SK-N-SH (cell line): ENCODE measurements at regions of chr4 and their contacts with region 1.

Region 1: GRCh38 chr4:115234405-115235093 is 121.1 kb upstream of the NDST4 start:
- DNase-seq: peak; percentile 15
- H3K4me3 ChIP-seq: no peak overlapping the region
- H3K27ac ChIP-seq: no peak overlapping the region
- H3K4me1 ChIP-seq: peaks cover 0 to 5% of the 10 kb centered on the region in 2 experiments; a peak in 1 of 4 replicates
- H3K27me3 ChIP-seq: no peaks in the 10 kb centered on the region
- CTCF ChIP-seq: peak; percentile 54
- EP300 ChIP-seq: no peak
- RAD21 ChIP-seq: peak; percentile 62

Region 2: DNA sequence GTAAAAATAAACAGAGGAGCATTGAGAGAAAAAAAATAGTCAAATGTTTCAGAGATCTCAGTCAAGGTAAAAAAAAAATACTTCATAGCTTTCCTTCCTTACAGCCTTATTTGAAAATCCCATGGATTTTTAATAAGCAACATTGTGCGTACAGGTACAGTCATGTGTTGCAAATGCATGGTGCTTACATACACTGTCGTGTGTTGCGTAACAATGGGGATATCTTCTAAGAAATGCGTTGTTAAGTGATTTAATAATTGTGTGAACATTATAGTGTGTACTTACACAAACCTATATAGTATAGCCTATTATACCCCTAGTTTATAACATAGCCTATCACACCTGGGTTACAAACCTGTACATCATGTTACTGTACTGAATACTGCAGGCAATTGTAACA is 463.9 kb before region 1 on chr4:
- CTCF ChIA-PET with region 1: no interaction called
- POLR2A ChIA-PET with region 1: no interaction called
- DNase-seq: no peak
- H3K4me3 ChIP-seq: no peak overlapping the region
- H3K27ac ChIP-seq: no peak overlapping the region
- H3K4me1 ChIP-seq: no peaks in the 10 kb centered on the region
- H3K27me3 ChIP-seq: no peaks in the 10 kb centered on the region
- CTCF ChIP-seq: no peak
- EP300 ChIP-seq: no peak
- RAD21 ChIP-seq: no peak

Region 3: DNA sequence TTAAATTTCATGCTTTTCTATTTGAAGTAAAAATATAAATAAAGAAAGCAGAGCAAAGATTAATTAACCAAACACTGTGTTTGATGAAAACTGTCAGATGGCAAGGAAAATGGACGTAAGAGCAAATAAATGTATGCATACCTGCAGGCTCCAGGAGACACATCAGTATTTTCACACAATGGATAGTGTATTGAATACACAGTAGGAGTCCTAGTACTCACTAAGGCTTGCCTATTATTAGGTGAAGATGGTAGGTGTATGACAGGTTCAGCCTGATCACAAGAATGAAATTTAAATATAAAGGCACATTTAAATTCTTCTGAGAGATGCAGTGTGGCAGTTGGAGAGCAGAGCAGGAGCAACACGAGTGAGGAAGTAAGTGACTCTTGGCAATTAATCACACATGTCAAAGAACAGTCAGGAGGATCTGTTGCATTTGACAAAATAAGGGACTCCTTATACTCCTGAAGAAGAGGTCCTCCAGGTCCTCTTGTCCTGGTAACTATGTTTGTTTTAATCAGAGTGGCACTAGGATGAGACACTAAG is 15.2 kb before region 1 on chr4:
- CTCF ChIA-PET with region 1: interaction called, 11 read pairs
- POLR2A ChIA-PET with region 1: no interaction called
- DNase-seq: no peak
- H3K4me3 ChIP-seq: no peak overlapping the region
- H3K27ac ChIP-seq: no peak overlapping the region
- H3K4me1 ChIP-seq: no peaks in the 10 kb centered on the region
- H3K27me3 ChIP-seq: no peaks in the 10 kb centered on the region
- CTCF ChIP-seq: no peak
- EP300 ChIP-seq: no peak
- RAD21 ChIP-seq: no peak

Region 4: GRCh38 chr4:115294717-115295116 is 60.2 kb after region 1 on chr4:
- CTCF ChIA-PET with region 1: no interaction called
- POLR2A ChIA-PET with region 1: no interaction called
- DNase-seq: no peak
- H3K4me3 ChIP-seq: no peak overlapping the region
- H3K27ac ChIP-seq: no peak overlapping the region
- H3K4me1 ChIP-seq: no peaks in the 10 kb centered on the region
- H3K27me3 ChIP-seq: no peaks in the 10 kb centered on the region
- CTCF ChIP-seq: no peak
- EP300 ChIP-seq: no peak
- RAD21 ChIP-seq: no peak

Region 5: GRCh38 chr4:115418635-115419396 is 184.3 kb after region 1 on chr4:
- CTCF ChIA-PET with region 1: no interaction called
- POLR2A ChIA-PET with region 1: no interaction called
- DNase-seq: no peak
- H3K4me3 ChIP-seq: no peak overlapping the region
- H3K27ac ChIP-seq: no peak overlapping the region
- H3K4me1 ChIP-seq: no peaks in the 10 kb centered on the region
- H3K27me3 ChIP-seq: no peaks in the 10 kb centered on the region
- CTCF ChIP-seq: no peak
- EP300 ChIP-seq: no peak
- RAD21 ChIP-seq: no peak

Region 6: GRCh38 chr4:115851918-115852766 is 617.6 kb after region 1 on chr4:
- CTCF ChIA-PET with region 1: interaction called, 16 read pairs
- POLR2A ChIA-PET with region 1: no interaction called
- DNase-seq: peak; percentile 14
- H3K4me3 ChIP-seq: no peak overlapping the region
- H3K27ac ChIP-seq: no peak overlapping the region
- H3K4me1 ChIP-seq: no peaks in the 10 kb centered on the region
- H3K27me3 ChIP-seq: no peaks in the 10 kb centered on the region
- CTCF ChIP-seq: peak; percentile 69
- EP300 ChIP-seq: no peak
- RAD21 ChIP-seq: peak; percentile 64